HEK293T (cell line): ENCODE measurements at regions of chr2 and their contacts with region 1.

Region 1: GRCh38 chr2:158745044-158745865 is 49.9 kb upstream of the DAPL1 start:
- DNase-seq: peak; percentile 41

Region 2: GRCh38 chr2:158034199-158034866 is 710.9 kb before region 1 on chr2:
- CTCF ChIA-PET with region 1: interaction called, 11 read pairs
- POLR2A ChIA-PET with region 1: no interaction called
- DNase-seq: peak; percentile 51

Region 3: DNA sequence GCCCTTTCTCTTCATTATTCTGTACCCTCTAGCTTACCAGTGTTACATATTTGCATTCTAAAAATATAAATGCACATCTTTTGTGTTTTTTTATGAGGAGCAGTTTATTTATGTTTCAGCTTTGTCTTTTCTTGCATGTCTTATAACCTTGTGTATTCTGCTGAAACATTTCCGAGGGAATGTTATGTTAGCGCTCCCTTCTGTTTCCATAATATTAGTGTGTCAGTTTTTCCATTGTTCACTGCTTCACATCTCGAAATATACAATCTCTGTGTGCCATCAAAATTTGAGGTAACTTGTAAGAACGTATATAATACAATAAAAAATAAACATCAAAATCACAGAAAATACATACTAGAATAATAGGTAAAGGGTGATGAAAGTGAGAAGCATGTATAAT is 135.2 kb before region 1 on chr2:
- CTCF ChIA-PET with region 1: no interaction called
- POLR2A ChIA-PET with region 1: no interaction called
- DNase-seq: no peak

Region 4: GRCh38 chr2:158649846-158650245 is 95.4 kb before region 1 on chr2:
- CTCF ChIA-PET with region 1: no interaction called
- POLR2A ChIA-PET with region 1: no interaction called
- DNase-seq: no peak

Region 5: GRCh38 chr2:158695305-158695704 is 50.0 kb before region 1 on chr2:
- CTCF ChIA-PET with region 1: no interaction called
- POLR2A ChIA-PET with region 1: no interaction called
- DNase-seq: no peak

Region 6: GRCh38 chr2:158723917-158724690 is 21.2 kb before region 1 on chr2:
- CTCF ChIA-PET with region 1: interaction called, 10 read pairs
- POLR2A ChIA-PET with region 1: no interaction called
- DNase-seq: peak; percentile 56